PC-9 (cell line): ENCODE measurements at regions of chr1 and their contacts with region 1.

Region 1: DNA sequence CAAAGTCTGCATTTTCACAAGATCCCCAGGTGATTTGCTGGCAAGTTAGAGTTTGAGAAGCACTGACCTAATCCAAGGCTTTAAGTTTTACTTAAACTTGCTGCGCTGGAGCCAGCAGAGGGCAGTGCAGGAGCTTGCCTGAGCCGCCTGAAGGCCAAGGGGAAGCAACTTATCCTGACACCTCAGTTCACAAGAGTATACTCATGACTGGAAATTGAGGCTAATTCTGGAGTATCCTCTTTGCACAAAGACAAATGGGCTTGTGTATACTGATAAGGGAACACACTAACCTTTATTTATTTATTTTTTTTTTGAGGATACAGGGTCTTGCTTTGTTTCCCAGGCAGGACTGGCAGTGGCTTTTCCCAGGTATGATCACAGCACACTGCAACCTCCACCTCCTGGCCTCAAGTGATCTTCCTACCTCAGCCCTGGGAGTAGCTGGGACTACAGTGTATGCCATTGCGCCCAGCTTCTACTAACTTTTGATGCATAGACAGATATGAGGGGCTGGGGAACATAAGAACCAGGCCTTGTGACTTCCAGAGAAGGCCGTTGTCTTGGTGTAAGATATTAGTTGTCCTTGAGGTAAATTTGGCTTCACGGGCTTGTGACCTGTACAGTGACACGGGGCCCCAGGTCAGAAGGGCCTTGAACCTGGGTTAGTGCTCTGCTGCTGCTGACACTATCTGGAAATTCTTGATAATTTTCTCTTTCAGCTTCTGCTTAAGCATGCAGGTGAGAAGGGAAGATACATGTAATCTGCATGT is 29.0 kb upstream of the SLAMF1 start:
- DNase-seq: peak in 1 of 2 experiments; percentile 57
- H3K4me3 ChIP-seq: no peak overlapping the region
- H3K27ac ChIP-seq: no peak overlapping the region
- H3K4me1 ChIP-seq: no peaks in the 10 kb centered on the region
- H3K27me3 ChIP-seq: peaks cover 48% of the 10 kb centered on the region; the same call in 1 of the 2 replicates
- CTCF ChIP-seq: peak; percentile 84

Region 2: DNA sequence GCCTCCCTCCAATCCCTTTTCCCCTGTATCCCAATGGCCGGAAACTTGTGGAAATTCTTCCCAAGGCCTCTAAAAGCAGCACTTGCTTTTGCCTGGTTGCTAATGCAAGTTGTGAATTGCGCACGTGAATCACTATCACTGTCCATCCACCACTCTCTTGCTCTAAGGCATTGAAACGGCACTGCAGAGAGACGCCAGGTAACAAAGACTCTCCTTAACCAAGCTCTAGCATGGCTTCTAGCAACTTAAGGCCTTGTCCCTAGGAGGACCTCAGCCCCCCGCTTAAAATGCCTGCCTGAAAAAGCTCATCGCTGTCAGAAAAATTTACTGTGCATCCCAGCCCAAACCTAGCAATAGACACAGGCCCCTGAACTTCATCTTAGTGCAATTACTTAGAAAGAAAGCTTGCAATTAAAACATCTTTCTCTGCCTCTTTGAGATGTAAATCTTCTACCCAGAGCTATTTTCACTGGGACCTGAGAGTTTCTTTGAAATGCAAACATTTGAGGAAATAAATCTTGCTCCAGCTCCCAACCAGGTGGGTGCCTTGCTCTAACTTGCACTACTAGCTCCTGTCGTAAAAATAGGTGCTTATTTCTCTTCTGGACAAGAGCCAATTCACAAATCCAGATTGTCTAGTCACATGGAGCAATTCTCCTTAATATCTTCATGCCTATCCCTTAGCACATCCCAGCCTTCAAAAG is 311.7 kb after region 1 on chr1:
- CTCF ChIA-PET with region 1: no interaction called
- POLR2A ChIA-PET with region 1: no interaction called
- intact Hi-C with region 1: loop called (anchors 2 kb)
- DNase-seq: no peak
- H3K4me3 ChIP-seq: no peak overlapping the region
- H3K27ac ChIP-seq: no peak overlapping the region
- H3K4me1 ChIP-seq: peaks cover 19% of the 10 kb centered on the region; the same call in 1 of the 2 replicates
- H3K27me3 ChIP-seq: no peaks in the 10 kb centered on the region
- CTCF ChIP-seq: no peak

Region 3: DNA sequence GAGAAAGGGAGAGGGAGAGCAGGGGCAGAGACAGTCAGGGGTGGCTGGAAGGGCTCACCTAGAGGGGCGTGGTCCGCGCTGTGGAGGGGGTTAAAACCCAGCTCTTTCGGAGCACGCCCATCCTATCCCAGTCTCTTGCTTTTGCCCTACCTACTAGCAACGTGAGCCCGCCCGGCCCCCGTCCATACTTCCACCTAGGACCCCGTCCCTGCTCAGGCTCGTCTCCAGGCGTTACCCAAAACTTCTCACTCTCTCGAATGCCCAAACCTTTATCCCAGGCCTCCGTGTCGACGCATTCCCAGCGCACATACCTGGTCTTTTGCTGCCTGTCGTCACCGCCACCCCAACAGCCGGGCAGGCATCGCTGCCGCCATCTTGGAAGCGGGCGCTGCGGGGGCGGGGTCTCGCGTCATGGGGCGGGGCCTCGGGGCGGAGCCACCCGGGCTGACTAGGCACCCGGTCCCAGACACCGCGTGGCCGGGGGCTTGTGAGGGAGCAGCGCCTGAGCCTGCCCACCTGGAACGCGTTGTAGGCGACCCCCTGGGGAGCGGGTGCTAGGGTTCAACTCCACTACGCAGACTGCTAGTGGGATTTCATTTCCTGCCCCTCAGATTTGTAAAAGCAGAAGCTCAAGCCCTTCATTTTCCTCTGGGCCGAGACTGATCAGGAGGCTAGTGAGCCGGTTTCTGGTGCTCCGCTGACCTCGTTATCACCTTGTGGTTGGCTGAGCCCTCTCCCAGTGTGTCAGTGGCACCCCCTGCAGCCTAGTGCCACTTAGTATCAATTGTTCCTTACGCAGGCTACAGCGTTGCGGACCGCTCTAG is 501.5 kb after region 1 on chr1 and contains the start of gene B4GALT3:
- CTCF ChIA-PET with region 1: no interaction called
- POLR2A ChIA-PET with region 1: interaction called, 29 read pairs
- intact Hi-C with region 1: no loop called
- DNase-seq: peak; percentile 64 to 91
- H3K4me3 ChIP-seq: peak within 1 kb of the TSS; percentile 83
- H3K27ac ChIP-seq: peak within 1 kb of the TSS; percentile 61
- H3K4me1 ChIP-seq: peaks cover 19% of the 10 kb centered on the region
- H3K27me3 ChIP-seq: no peaks in the 10 kb centered on the region
- CTCF ChIP-seq: peak; percentile 49; the same call in 1 of the 2 replicates
- total RNA-seq, gene B4GALT3: 35.5 and 47.8 TPM in 2 replicates